ENCODE measurements at regions of chr12 and their contacts with region 1.

Region 1: GRCh38 chr12:106136263-106136662 is 2.5 kb downstream of the NUAK1 start:
- DNase-seq: peak; percentile 68
- H3K4me3 ChIP-seq: no peak overlapping the region
- H3K27ac ChIP-seq: no peak overlapping the region
- H3K4me1 ChIP-seq: no peaks in the 10 kb centered on the region
- CTCF ChIP-seq: peak; percentile 95

Region 2: DNA sequence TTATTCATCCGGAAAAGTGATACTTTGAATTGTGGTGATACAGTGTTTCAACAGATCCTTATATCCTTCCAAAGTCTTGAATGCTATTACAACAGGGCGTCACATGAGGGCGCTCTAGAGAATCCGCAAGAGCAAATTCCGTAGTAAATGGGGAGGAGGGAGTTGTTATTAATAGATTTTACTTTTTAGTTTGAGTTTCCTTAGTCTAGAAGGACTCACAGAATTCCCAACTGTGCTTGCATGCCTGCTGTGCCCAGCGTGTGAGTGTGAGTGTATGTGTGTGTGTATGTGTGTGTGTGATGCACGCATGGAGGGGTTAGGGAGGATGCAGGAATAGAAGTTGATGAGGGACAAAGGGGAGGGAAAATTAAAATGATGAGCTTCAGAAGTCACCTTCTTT is 430.5 kb before region 1 on chr12:
- CTCF ChIA-PET with region 1: no interaction called
- POLR2A ChIA-PET with region 1: no interaction called
- intact Hi-C with region 1: loop called (anchors 5 kb)
- DNase-seq: peak; percentile 29
- H3K4me3 ChIP-seq: no peak overlapping the region
- H3K27ac ChIP-seq: no peak overlapping the region
- H3K4me1 ChIP-seq: no peaks in the 10 kb centered on the region
- CTCF ChIP-seq: peak; percentile 98